AG04450 (cell line): ENCODE measurements at regions of chr5 and their contacts with region 1.

Region 1: DNA sequence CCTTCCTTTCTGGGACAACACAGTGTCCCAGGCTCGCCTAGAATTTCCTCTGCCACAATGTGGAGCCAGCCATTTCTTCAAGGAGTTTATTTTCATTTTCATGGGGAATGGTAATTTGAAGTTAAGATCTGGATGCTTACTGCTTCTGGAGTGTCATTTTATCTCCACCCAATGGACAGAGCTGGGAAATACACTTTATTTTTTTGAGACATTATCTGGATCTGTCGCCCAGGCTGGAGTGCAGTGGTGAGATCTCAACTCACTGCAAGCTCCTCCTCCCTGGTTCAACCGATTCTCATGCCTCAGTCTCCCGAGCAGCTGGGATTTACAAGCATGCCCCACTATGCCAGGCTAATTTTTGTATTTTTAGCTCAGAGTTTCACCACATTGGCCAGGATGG is 12.7 kb upstream of the THG1L start:
- DNase-seq: no peak
- H3K4me3 ChIP-seq: no peak overlapping the region
- H3K27ac ChIP-seq: no peak overlapping the region
- H3K27me3 ChIP-seq: no peaks in the 10 kb centered on the region
- CTCF ChIP-seq: peak; percentile 69

Region 2: GRCh38 chr5:157342822-157343402 is 375.6 kb before region 1 on chr5:
- CTCF ChIA-PET with region 1: interaction called, 16 read pairs
- POLR2A ChIA-PET with region 1: no interaction called
- DNase-seq: no peak
- H3K4me3 ChIP-seq: no peak overlapping the region
- H3K27ac ChIP-seq: no peak overlapping the region
- H3K27me3 ChIP-seq: no peaks in the 10 kb centered on the region
- CTCF ChIP-seq: peak; percentile 48

Region 3: GRCh38 chr5:157366741-157367674 is 351.5 kb before region 1 on chr5:
- CTCF ChIA-PET with region 1: interaction called, 14 read pairs
- POLR2A ChIA-PET with region 1: no interaction called
- DNase-seq: peak; percentile 54
- H3K4me3 ChIP-seq: no peak overlapping the region
- H3K27ac ChIP-seq: no peak overlapping the region
- H3K27me3 ChIP-seq: no peaks in the 10 kb centered on the region
- CTCF ChIP-seq: peak; percentile 82

Region 4: DNA sequence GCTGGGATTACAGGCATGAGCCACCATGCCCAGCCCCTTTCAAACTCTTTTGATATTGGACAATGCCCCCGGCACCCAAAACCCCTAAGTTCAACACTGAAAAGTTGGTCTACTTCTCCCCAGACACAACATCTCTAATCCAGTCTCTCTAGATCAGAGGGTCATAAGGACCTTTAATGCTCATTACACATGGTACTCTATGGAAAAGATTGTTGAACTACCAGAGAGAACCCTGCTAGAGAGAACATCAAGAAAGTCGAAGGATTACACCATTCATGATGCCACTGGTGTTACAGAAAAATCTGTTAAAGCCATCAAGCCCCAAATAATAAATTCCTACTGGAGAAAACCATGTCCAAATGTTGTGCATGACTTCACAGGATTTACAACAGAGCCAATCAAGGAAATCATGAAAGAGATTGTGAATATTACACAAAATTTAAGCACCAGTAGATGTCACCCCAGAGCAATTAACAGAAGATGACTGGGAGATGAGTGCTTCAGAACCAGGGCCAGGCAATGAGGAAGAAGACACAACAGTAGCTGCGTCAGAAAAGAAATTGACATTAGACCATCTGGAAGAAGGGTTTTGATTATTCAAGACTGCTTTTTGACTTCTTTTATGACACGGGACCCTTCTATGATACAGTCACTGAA is 286.8 kb before region 1 on chr5:
- CTCF ChIA-PET with region 1: interaction called, 77 read pairs
- POLR2A ChIA-PET with region 1: no interaction called
- DNase-seq: peak; percentile 24
- H3K4me3 ChIP-seq: no peak overlapping the region
- H3K27ac ChIP-seq: no peak overlapping the region
- H3K27me3 ChIP-seq: no peaks in the 10 kb centered on the region
- CTCF ChIP-seq: peak; percentile 57

Region 5: GRCh38 chr5:157471709-157472108 is 246.8 kb before region 1 on chr5:
- CTCF ChIA-PET with region 1: interaction called, 53 read pairs
- POLR2A ChIA-PET with region 1: no interaction called
- DNase-seq: no peak
- H3K4me3 ChIP-seq: no peak overlapping the region
- H3K27ac ChIP-seq: no peak overlapping the region
- H3K27me3 ChIP-seq: no peaks in the 10 kb centered on the region
- CTCF ChIP-seq: peak; percentile 68

Region 6: DNA sequence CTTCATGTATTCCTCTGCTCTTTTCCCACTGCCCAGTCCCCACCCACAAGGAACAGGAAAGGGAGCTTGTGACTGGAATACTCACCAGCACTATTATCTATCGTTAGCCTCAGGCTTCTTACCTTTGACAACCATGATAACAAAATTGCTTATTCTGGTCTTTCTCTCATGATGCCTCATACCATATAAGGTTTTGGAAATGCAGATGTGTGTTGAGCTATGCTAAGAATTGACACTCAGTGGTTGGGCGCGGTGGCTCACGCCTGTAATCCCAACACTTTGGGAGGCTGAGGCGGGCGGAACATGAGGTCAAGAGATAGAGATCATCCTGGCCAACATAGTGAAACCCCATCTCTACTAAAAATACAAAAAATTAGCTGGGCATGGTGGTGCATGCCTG is 91.7 kb before region 1 on chr5:
- CTCF ChIA-PET with region 1: no interaction called
- POLR2A ChIA-PET with region 1: no interaction called
- DNase-seq: no peak
- H3K4me3 ChIP-seq: no peak overlapping the region
- H3K27ac ChIP-seq: no peak overlapping the region
- H3K27me3 ChIP-seq: no peaks in the 10 kb centered on the region
- CTCF ChIP-seq: no peak

Region 7: GRCh38 chr5:157731272-157732129 is 13.0 kb after region 1 on chr5 and contains the start of gene THG1L:
- CTCF ChIA-PET with region 1: interaction called, 10 read pairs
- POLR2A ChIA-PET with region 1: interaction called, 4 read pairs
- DNase-seq: peak; percentile 95
- H3K4me3 ChIP-seq: peak within 1 kb of the TSS; percentile 77
- H3K27ac ChIP-seq: peak within 1 kb of the TSS; percentile 88
- H3K27me3 ChIP-seq: no peaks in the 10 kb centered on the region
- CTCF ChIP-seq: no peak
- polyA plus RNA-seq, gene THG1L: 18.6 and 21.0 TPM in 2 replicates

Region 8: DNA sequence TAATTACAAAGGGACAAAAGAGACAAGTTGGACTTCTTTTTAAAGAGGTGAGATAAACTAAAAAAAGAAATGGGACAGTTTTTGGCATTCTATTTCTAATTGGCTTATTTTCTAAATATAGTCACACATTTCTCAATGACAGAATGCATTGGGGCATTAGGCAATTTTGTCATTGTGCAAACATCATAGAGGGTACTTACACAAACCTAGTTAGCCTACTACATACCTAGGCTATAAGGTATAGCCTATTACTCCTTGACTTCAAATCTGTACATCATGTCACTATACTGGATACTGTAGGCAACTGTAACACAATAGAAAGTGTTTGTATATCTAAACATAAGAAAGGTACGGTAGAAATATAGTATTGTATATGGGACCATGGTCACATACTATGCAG is 81.1 kb after region 1 on chr5:
- CTCF ChIA-PET with region 1: no interaction called
- POLR2A ChIA-PET with region 1: no interaction called
- DNase-seq: no peak
- H3K4me3 ChIP-seq: no peak overlapping the region
- H3K27ac ChIP-seq: no peak overlapping the region
- H3K27me3 ChIP-seq: no peaks in the 10 kb centered on the region
- CTCF ChIP-seq: no peak

Region 9: GRCh38 chr5:157989296-157989695 is 270.8 kb after region 1 on chr5:
- CTCF ChIA-PET with region 1: no interaction called
- POLR2A ChIA-PET with region 1: no interaction called
- DNase-seq: no peak
- H3K4me3 ChIP-seq: no peak overlapping the region
- H3K27ac ChIP-seq: no peak overlapping the region
- H3K27me3 ChIP-seq: no peaks in the 10 kb centered on the region
- CTCF ChIP-seq: no peak